Mammary epithelial cell (primary cell): ENCODE measurements at regions of chr20 and their contacts with region 1.

Region 1: GRCh38 chr20:2814587-2815051 is at the start of gene C20orf141:
- DNase-seq: peak; percentile 87
- H3K4me3 ChIP-seq: no peak within 1 kb of the TSS
- H3K27ac ChIP-seq: no peak within 1 kb of the TSS
- H3K4me1 ChIP-seq: peaks cover 10% of the 10 kb centered on the region
- H3K27me3 ChIP-seq: no peaks in the 10 kb centered on the region
- CTCF ChIP-seq: no peak
- total RNA-seq, gene C20orf141: not detected

Region 2: DNA sequence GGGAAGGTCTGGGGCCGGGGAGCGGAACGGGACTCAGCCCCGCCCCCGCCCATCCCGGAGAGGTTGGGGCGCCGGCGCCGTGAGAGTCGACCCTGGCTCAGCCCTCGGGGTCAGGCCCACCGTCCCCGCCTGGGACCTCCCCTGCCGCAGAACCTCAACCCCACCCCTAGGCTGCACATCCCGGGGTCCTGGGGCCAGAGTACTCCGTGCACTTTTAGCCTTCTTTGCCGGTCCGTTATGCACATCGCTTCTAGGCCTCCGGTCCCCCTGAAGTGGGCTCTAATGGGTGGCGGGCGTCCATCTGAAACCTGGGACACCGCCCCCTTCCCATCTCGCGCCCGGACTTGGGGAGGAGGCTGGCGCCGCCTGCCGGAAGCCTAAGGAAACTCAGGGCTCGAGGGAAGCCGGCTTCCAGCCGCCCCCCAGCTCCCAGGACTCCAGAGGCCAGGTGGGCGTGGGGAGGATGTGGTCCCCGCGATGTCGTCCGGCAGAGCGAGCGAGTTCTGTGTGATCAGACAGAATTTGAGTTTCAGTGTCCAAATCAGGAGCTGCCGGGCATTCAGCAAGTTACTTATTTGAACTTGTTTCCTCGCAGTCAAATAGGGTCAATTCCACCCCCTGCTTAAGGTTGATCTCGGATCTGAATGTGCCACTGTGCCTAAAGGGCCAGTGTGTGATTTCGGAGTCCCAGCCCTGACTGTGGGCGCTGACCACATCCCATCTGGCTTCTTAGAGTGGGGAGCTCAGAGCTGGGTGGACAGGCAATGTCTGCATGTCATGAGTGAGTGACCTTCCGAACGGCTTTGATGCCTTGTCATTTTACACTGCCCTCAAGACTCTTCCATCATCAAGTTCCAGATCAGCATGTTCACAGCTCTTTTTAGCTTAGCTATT is 61.8 kb before region 1 on chr20:
- CTCF ChIA-PET with region 1: no interaction called
- dilution Hi-C with region 1: no loop called
- in situ Hi-C with region 1: no loop called
- intact Hi-C with region 1: no loop called
- DNase-seq: no peak
- H3K4me3 ChIP-seq: peak overlapping the region in 2 of 3 experiments; percentile 22 to 37
- H3K27ac ChIP-seq: no peak overlapping the region
- H3K4me1 ChIP-seq: peaks cover 10% of the 10 kb centered on the region
- H3K27me3 ChIP-seq: peaks cover 20% of the 10 kb centered on the region
- CTCF ChIP-seq: peak; percentile 55 to 71

Region 3: GRCh38 chr20:2767768-2768631 is 46.6 kb before region 1 on chr20:
- CTCF ChIA-PET with region 1: no interaction called
- dilution Hi-C with region 1: loop called (anchors 5 kb)
- in situ Hi-C with region 1: no loop called
- intact Hi-C with region 1: no loop called
- DNase-seq: peak; percentile 85
- H3K4me3 ChIP-seq: peak overlapping the region in 1 of 3 experiments; percentile 16
- H3K27ac ChIP-seq: no peak overlapping the region
- H3K4me1 ChIP-seq: peaks cover 13% of the 10 kb centered on the region
- H3K27me3 ChIP-seq: peaks cover 8% of the 10 kb centered on the region
- CTCF ChIP-seq: no peak

Region 4: GRCh38 chr20:2775139-2775538 is 39.5 kb before region 1 on chr20:
- CTCF ChIA-PET with region 1: no interaction called
- dilution Hi-C with region 1: no loop called
- in situ Hi-C with region 1: no loop called
- intact Hi-C with region 1: loop called (anchors 1 kb)
- DNase-seq: no peak
- H3K4me3 ChIP-seq: no peak overlapping the region
- H3K27ac ChIP-seq: no peak overlapping the region
- H3K4me1 ChIP-seq: no peaks in the 10 kb centered on the region
- H3K27me3 ChIP-seq: peaks cover 5% of the 10 kb centered on the region
- CTCF ChIP-seq: no peak

Region 5: DNA sequence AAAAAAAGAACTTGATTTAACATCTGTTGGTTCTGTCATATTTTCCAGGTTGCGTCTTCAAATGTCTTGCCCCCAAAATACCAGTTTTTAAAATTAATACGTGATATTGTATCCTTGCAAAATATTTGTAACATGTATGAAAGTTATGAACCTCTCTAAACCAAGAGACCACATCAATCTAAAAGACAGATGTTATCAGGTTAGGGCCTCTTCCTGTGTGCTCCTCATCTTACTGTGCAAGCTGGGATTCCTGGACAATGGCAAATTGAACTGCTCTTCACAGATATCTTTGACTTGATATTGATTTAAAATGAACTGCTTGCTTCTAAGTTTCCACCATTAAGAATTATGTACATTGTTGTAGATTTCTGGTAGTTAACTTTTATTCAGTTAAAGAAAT is 11.1 kb after region 1 on chr20:
- CTCF ChIA-PET with region 1: no interaction called
- dilution Hi-C with region 1: no loop called
- in situ Hi-C with region 1: no loop called
- intact Hi-C with region 1: no loop called
- DNase-seq: no peak
- H3K4me3 ChIP-seq: no peak overlapping the region
- H3K27ac ChIP-seq: no peak overlapping the region
- H3K4me1 ChIP-seq: no peaks in the 10 kb centered on the region
- H3K27me3 ChIP-seq: peaks cover 13% of the 10 kb centered on the region
- CTCF ChIP-seq: no peak

Region 6: DNA sequence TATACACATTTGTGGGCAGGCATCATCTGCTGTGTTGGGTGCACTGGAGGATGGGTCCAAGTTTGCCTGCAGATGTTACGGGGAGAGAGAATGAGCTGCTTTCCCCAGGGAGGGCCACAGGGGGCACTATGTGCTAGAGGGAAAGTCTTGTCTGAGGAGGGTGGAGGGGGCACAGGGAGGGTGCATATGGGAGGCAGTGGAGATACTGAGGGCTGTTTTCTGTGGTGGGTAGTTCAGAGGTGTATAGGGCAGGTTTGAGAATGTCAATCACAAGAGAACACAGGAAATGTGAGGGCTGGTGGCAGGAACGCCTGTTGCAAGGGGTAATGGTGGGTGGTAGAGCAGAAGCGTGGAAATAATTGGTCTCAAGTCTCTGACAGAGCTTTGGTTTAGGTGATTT is 51.0 kb after region 1 on chr20:
- CTCF ChIA-PET with region 1: no interaction called
- dilution Hi-C with region 1: loop called (anchors 5 kb)
- in situ Hi-C with region 1: no loop called
- intact Hi-C with region 1: no loop called
- DNase-seq: no peak
- H3K4me3 ChIP-seq: no peak overlapping the region
- H3K27ac ChIP-seq: no peak overlapping the region
- H3K4me1 ChIP-seq: peaks cover 4% of the 10 kb centered on the region
- H3K27me3 ChIP-seq: no peaks in the 10 kb centered on the region
- CTCF ChIP-seq: no peak